Spleen (tissue), 13 donors: ENCODE measurements at regions of chr12 and their contacts with region 1.

Region 1: DNA sequence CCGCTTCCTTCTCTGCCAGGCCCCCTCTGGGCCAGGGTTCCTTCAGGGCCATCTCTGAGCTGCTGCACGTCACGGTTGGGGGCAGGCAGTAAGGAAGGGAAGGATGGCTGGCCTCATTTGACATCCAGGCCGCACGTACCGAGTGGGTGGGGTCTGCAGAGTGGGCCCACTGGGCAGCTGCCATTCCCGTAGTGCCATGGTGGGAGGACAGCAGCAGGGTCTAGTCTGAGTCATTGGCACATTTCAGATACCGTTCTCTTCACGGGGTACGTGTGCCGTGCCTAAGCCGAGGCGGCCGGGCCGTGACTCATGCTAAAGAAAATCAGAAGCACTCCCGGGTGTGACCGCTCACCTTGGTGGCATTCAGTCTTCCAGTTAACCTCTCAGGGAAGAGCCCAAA is 43.9 kb downstream of the IL31 start:
- DNase-seq: no peak
- H3K4me3 ChIP-seq: no peak overlapping the region
- H3K27ac ChIP-seq: no peak overlapping the region
- H3K4me1 ChIP-seq: peaks cover 0 to 19% (median 11%) of the 10 kb centered on the region in 6 donors
- H3K27me3 ChIP-seq: no peaks in the 10 kb centered on the region
- CTCF ChIP-seq: no peak
- POLR2A ChIP-seq: no peak

Region 2: DNA sequence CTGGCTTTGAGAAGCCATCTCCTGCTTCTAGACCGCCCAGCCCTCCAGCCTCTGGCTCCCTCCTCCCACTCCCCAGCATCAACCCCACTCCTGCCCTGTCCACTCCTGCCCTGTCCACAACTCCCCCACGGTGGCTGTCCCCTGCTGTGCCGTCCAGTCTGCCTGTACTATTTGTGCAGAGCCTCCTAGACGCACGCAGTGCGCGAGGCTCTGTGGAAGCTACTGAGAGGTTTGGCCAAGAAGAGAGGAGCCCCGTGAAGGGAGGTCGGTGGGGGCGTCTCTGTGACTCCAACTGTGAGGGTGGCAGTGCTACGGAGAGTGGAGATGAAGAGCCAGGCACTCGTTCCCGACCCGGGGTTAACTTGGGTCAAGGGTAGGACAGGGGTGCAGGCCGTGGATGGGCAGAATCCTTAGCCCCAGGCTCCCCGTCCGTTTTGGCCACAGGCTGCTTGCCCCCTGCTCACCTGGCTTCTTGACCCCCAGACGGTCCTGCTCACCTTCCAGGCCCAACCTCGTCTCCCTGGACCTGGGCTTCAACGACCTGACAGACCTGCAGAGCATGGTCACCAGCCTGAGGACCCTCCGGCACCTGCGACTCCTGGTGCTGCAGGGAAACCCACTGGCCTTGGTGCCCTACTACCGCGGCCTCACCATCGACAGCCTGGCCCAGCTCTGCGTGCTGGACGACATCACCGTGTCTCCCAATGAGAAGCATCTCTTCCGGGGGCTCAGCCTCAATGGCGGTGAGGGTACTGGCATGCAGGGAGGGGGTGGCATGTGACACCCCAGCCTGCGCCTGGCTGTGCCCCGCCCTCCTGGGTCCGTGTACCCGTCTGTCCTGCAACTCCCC is 59.7 kb after region 1 on chr12:
- intact Hi-C with region 1: loop called (anchors 5 kb)
- DNase-seq: no peak
- H3K4me3 ChIP-seq: no peak overlapping the region
- H3K27ac ChIP-seq: no peak overlapping the region
- H3K4me1 ChIP-seq: peaks cover 0 to 11% (median under 1%) of the 10 kb centered on the region in 6 donors
- H3K27me3 ChIP-seq: peaks cover 0 to 10% (median 0%) of the 10 kb centered on the region in 7 donors
- CTCF ChIP-seq: no peak
- POLR2A ChIP-seq: no peak

Region 3: DNA sequence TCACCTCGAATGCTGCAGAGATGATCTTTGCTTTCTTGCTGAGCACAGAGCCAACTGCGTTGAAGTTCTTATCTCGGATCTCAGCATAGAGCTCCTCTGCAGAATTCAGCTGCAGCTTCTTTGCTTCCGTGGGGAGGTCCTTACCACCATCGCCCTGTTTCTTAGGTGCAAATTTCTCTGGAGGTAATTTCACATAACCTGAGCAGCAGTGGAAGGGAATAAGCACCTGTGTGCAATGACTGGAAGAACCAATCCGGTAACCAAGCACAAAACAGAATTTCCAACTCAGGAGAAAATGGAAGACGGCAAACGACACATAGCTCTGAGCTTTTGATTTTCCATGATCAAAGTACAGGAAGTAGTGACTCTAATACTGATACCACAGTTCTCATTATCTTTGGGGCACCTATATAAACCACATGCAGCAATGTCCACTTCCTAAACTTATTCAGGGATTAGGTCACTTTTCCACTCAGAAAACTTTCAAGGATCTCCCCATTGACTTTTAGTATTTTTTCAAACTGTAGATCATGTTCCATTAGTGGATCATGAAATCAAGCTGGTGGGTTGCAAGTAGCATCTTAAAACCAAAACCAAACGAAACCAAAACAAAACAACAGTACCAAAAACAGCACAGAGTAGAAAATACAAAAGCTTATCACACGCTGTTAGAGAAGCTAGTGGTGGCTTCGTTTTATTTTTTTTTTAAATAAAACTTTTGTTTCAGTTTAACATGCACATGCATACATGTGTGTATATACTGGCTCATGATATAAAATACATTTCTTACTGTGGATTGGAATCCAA is 114.6 kb after region 1 on chr12:
- intact Hi-C with region 1: no loop called
- DNase-seq: no peak
- H3K4me3 ChIP-seq: peak overlapping the region in 5 of 8 donors; percentile 2 to 62 (median 12)
- H3K27ac ChIP-seq: peak overlapping the region in 6 of 8 donors; percentile 2 to 72 (median 54)
- H3K4me1 ChIP-seq: peaks cover 0 to 8% (median 3%) of the 10 kb centered on the region in 6 donors
- H3K27me3 ChIP-seq: no peaks in the 10 kb centered on the region
- CTCF ChIP-seq: no peak
- POLR2A ChIP-seq: no peak

Region 4: DNA sequence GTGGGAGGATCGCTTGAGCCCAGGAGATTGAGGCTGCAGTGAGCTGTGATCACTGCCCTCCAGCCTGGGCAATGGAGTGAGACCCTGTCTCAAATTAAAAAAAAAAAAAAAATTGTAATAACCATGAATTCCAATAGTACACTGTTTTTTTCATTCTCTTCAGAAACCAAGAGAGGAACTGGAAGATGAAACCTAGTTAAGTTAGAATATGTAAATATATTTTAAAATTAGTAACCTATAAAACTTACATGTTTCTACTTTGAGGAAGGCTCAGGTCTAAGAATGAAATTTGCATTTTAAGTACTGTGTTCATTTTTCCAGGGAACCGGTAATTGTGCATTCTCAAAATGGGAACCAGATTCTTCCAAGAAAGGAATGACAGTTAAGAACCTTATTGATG is 415.7 kb after region 1 on chr12:
- intact Hi-C with region 1: no loop called
- DNase-seq: no peak
- H3K4me3 ChIP-seq: no peak overlapping the region
- H3K27ac ChIP-seq: peak overlapping the region in 1 of 8 donors; percentile 31
- H3K4me1 ChIP-seq: peaks cover 0 to 6% (median 0%) of the 10 kb centered on the region in 6 donors
- H3K27me3 ChIP-seq: no peaks in the 10 kb centered on the region
- CTCF ChIP-seq: no peak
- POLR2A ChIP-seq: no peak